Naive thymus-derived CD8-positive, alpha-beta T cell (primary cell): ENCODE measurements at regions of chr6 and their contacts with region 1.

Region 1: DNA sequence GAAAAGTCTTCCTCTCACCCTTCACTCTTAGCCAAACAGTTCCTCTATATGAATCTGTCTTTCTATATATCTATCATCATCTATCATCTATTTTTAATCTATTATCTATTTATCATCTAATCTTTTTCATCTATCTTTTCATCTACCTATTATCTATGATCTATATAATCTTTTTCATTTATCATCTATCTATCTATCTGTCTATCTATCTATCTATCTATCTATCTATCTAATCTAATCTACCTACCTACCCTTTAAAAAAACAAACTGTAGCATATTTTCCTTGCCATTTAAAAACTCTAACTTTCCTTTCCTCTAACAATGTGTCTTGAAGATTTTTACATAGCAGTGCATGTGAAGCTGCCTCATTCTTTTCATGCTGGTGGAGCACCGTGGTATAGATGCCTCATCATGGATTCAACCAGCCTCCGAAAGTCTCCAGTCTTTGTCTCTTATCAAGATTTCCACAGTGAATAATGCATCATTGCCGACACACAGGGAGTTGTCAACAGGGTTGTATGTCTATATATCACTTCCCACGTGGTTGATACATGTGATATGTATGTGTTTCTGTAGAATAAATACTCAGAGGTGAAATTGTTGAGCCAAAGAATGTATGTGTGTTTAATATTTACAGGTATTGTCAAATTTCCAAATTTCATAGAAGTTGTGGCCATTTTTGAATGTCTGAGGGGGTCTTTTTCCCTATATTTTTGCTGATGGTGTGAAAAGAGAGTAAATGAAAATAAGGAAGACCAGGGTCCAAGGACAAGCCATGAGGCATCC is 51.3 kb downstream of the VEGFA start:
- DNase-seq: no peak
- ATAC-seq: no peak
- H3K4me3 Mint-ChIP-seq: no peak overlapping the region
- H3K27ac Mint-ChIP-seq: peak overlapping the region in 1 of 10 donors; percentile 52
- H3K4me1 Mint-ChIP-seq: peaks cover 0 to 9% (median 1%) of the 10 kb centered on the region in 4 donors
- H3K27me3 Mint-ChIP-seq: peaks cover 0 to 13% (median 3%) of the 10 kb centered on the region in 5 donors

Region 2: GRCh38 chr6:43805699-43806042 is 15.6 kb before region 1 on chr6:
- POLR2A ChIA-PET with region 1: interaction called, 10 read pairs
- DNase-seq: no peak
- ATAC-seq: no peak
- H3K4me3 Mint-ChIP-seq: no peak overlapping the region
- H3K27ac Mint-ChIP-seq: no peak overlapping the region
- H3K4me1 Mint-ChIP-seq: no peaks in the 10 kb centered on the region
- H3K27me3 Mint-ChIP-seq: no peaks in the 10 kb centered on the region